ENCODE measurements at regions of chr9 and their contacts with region 1.

Region 1: GRCh38 chr9:70563431-70564204 is 149.2 kb upstream of the KLF9 start:
- DNase-seq: peak; percentile 82
- H3K4me3 Mint-ChIP-seq: peak overlapping the region; percentile 38
- H3K27ac Mint-ChIP-seq: peak overlapping the region; percentile 97
- H3K4me1 Mint-ChIP-seq: peaks cover 52% of the 10 kb centered on the region
- H3K27me3 Mint-ChIP-seq: no peaks in the 10 kb centered on the region

Region 2: GRCh38 chr9:70258692-70259511 is 304.7 kb before region 1 on chr9 and contains the start of gene SMC5:
- CTCF ChIA-PET with region 1: no interaction called
- intact Hi-C with region 1: loop called (anchors 1 kb)
- DNase-seq: peak; percentile 85
- H3K4me3 Mint-ChIP-seq: peak within 1 kb of the TSS; percentile 92
- H3K27ac Mint-ChIP-seq: peak within 1 kb of the TSS; percentile 96
- H3K4me1 Mint-ChIP-seq: peaks cover 61% of the 10 kb centered on the region
- H3K27me3 Mint-ChIP-seq: no peaks in the 10 kb centered on the region
- total RNA-seq, gene SMC5: 30.4 to 31.2 TPM

Region 3: DNA sequence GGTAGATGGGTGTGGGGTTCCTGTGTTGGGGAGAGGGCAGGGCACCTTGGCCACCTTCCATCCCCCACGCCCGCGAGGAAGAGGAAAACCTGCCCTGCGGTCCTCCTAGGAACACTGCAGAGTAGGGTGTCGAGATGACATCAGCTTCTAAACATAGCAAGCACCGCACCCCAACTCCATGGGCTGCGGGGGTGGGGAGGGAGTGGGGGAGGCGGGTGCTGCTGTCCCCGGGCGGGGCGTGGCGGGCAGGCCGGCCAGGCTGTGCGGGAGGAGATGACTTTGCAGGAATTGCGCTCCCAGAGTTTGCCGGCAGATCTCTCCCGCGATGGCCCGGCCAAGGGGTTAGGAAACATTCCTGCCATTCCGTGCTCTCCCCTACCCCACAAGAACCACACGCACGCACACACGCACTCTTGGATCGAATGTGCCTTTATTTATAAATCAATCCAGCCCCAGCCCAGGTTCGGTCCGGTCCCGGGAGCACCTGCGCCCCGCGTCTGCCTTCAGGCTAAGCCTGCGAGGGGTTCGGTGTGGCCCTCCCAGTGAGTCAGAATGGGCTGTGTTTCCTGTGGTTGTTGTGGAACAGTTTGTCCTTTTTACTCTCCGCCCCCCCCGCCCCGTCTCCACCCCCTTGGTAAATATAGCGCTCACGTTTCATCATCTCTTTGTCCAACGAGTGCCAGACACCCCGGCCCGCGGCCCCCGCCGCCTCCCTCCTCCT is 143.9 kb before region 1 on chr9:
- CTCF ChIA-PET with region 1: interaction called, 17 read pairs
- intact Hi-C with region 1: loop called (anchors 1 kb)
- DNase-seq: peak; percentile 94
- H3K4me3 Mint-ChIP-seq: peak overlapping the region; percentile 96
- H3K27ac Mint-ChIP-seq: peak overlapping the region; percentile 100
- H3K4me1 Mint-ChIP-seq: peaks cover 47% of the 10 kb centered on the region
- H3K27me3 Mint-ChIP-seq: no peaks in the 10 kb centered on the region

Region 4: GRCh38 chr9:70519912-70520724 is 43.5 kb before region 1 on chr9:
- CTCF ChIA-PET with region 1: interaction called, 7 read pairs
- intact Hi-C with region 1: loop called (anchors 1 kb)
- DNase-seq: peak; percentile 49
- H3K4me3 Mint-ChIP-seq: peak overlapping the region; percentile 53
- H3K27ac Mint-ChIP-seq: peak overlapping the region; percentile 82
- H3K4me1 Mint-ChIP-seq: peaks cover 32% of the 10 kb centered on the region
- H3K27me3 Mint-ChIP-seq: no peaks in the 10 kb centered on the region

Region 5: DNA sequence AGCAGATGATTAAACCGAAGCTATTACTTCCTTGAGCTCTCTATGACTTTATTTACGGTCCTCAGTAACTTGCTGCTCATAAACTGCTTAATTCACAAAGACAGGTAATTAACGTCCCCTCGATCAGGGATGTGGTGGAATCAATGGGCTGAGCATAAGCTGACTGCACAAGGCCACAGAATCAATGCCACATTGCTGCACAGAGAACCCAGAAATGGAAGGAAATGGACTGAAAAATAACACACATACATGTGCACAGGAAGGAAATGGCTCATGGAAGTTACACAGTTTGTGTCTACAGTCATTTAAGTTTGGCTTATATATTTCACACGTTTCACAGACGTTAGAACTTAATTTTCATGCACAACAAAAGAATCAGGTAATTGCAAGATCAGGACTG is 30.9 kb before region 1 on chr9:
- CTCF ChIA-PET with region 1: interaction called, 3 read pairs
- intact Hi-C with region 1: loop called (anchors 1 kb)
- DNase-seq: peak; percentile 20
- H3K4me3 Mint-ChIP-seq: no peak overlapping the region
- H3K27ac Mint-ChIP-seq: no peak overlapping the region
- H3K4me1 Mint-ChIP-seq: peaks cover 28% of the 10 kb centered on the region
- H3K27me3 Mint-ChIP-seq: no peaks in the 10 kb centered on the region

Region 6: DNA sequence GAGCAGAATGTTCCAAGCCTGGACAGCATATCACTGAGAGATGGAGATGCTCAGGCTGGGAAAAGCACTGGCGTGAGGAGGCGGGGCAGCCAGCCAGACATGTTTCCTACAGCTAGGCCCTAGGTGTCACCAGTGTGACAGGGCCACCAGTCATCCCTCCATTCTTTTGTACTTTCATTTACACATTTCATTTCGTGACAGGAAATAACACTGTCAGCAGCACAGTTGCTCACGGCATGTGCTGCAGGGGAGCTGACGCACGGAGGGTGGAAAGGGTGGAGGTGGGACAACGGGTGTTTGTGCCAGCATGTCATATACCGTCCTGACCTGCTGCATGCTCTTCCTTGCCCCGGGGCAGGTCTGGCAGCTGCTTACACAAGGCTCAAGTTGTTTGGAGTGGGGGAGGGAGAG is 1219.5 kb after region 1 on chr9:
- CTCF ChIA-PET with region 1: no interaction called
- intact Hi-C with region 1: loop called (anchors 5 kb)
- DNase-seq: peak; percentile 95
- H3K4me3 Mint-ChIP-seq: peak overlapping the region; percentile 67
- H3K27ac Mint-ChIP-seq: peak overlapping the region; percentile 92
- H3K4me1 Mint-ChIP-seq: peaks cover 47% of the 10 kb centered on the region
- H3K27me3 Mint-ChIP-seq: no peaks in the 10 kb centered on the region